GM13976 (cell line): ENCODE measurements at regions of chr17 and their contacts with region 1.

Region 1: GRCh38 chr17:76868176-76868668 is at the start of gene MGAT5B:
- DNase-seq: peak; percentile 96
- CTCF ChIP-seq: peak; percentile 97

Region 2: DNA sequence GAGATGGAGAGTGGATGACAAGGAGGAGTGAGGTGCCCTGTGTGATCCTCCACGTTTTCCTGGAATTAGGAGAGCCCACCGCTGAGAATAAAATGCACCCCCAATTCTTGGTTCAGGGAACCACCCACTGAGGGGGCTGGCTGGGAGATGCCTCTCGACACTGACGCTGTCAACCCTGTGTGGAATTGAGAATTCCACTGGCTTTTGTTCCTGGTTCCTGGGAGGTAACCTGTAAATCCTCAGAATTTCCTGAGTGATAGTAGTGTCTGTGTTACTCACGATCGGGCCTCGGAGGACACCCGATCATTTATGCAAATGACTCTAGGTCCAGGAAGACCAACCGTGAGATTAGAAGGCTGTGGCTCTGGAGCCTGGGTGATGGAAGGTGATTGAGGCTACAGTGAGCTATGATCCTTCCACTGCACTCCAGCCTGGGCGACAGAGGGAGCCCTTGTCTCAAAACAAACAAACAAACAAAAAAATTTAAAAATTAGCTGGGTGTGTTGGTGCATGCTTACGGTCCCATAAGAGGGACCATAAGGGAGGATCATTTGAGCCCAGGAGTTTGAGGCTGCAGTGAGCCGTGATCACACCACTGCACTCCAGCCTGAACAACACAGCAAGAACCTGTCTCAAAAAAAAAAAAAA is 502.8 kb before region 1 on chr17:
- in situ Hi-C with region 1: no loop called
- DNase-seq: no peak
- CTCF ChIP-seq: peak; percentile 50

Region 3: GRCh38 chr17:76793775-76794174 is 74.4 kb before region 1 on chr17:
- in situ Hi-C with region 1: no loop called
- DNase-seq: peak; percentile 37
- CTCF ChIP-seq: peak; percentile 10

Region 4: GRCh38 chr17:77061669-77062068 is 193.4 kb after region 1 on chr17:
- in situ Hi-C with region 1: loop called (anchors 10 kb)
- DNase-seq: no peak
- CTCF ChIP-seq: no peak

Region 5: GRCh38 chr17:77254951-77255825 is 387.0 kb after region 1 on chr17:
- in situ Hi-C with region 1: loop called (anchors 25 kb)
- DNase-seq: no peak
- CTCF ChIP-seq: no peak